Activated CD8-positive, alpha-beta T cell treated with anti-CD3 and anti-CD28 coated beads, Interleukin-2, amount 10 ng/mL, durations not matched to agents 7 days and 5 days (primary cell): ENCODE measurements at regions of chr12 and their contacts with region 1.

Region 1: GRCh38 chr12:9797722-9798619 is 29.3 kb upstream of the KLRF1 start:
- DNase-seq: peak; percentile 87
- ATAC-seq: peak; percentile 83
- H3K4me3 Mint-ChIP-seq: no peak overlapping the region
- H3K27ac Mint-ChIP-seq: peak overlapping the region; percentile 64
- H3K4me1 Mint-ChIP-seq: peaks cover 46% of the 10 kb centered on the region
- H3K27me3 Mint-ChIP-seq: peaks cover 4% of the 10 kb centered on the region

Region 2: DNA sequence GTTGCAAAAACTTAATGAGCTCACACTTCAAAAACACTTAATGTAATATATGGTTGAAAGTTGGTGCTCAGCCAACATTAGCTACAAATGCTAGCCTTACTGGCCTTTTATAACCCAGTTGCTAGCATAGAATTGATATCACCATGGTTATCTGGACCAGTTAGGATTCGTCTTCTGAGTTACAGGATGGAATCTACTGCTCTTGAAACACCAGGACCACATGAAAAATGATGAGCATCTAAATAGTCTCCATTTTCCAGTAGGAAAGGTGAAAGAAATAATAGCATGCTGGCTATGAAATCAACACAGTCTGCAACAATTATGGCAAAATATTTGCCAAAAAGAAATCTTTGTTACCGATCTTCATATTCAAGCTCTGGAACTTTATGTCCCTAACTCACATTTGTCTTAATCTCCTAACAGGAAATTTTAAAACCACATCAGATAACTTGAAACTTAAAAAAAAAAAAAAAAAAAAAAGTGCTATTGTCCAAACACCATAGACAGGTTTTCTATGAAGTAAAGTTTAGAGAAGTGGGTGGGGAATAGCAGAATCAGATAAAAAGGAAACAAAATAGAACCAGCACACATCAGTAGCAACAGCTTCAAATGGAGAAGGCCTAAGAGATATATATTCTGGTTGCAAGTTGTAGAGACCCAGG is 24.6 kb before region 1 on chr12:
- CTCF ChIA-PET with region 1: interaction called, 54 read pairs
- POLR2A ChIA-PET with region 1: interaction called, 4 read pairs
- DNase-seq: no peak
- ATAC-seq: peak; percentile 77
- H3K4me3 Mint-ChIP-seq: peak overlapping the region; percentile 65
- H3K27ac Mint-ChIP-seq: peak overlapping the region; percentile 69
- H3K4me1 Mint-ChIP-seq: peaks cover 87% of the 10 kb centered on the region
- H3K27me3 Mint-ChIP-seq: no peaks in the 10 kb centered on the region

Region 3: GRCh38 chr12:9948606-9949296 is 150.8 kb after region 1 on chr12:
- CTCF ChIA-PET with region 1: interaction called, 10 read pairs
- POLR2A ChIA-PET with region 1: no interaction called
- DNase-seq: peak; percentile 44
- ATAC-seq: peak; percentile 81
- H3K4me3 Mint-ChIP-seq: peak overlapping the region; percentile 1
- H3K27ac Mint-ChIP-seq: peak overlapping the region; percentile 80
- H3K4me1 Mint-ChIP-seq: peaks cover 60% of the 10 kb centered on the region
- H3K27me3 Mint-ChIP-seq: no peaks in the 10 kb centered on the region